ENCODE measurements at regions of chr13 and their contacts with region 1.

Region 1: DNA sequence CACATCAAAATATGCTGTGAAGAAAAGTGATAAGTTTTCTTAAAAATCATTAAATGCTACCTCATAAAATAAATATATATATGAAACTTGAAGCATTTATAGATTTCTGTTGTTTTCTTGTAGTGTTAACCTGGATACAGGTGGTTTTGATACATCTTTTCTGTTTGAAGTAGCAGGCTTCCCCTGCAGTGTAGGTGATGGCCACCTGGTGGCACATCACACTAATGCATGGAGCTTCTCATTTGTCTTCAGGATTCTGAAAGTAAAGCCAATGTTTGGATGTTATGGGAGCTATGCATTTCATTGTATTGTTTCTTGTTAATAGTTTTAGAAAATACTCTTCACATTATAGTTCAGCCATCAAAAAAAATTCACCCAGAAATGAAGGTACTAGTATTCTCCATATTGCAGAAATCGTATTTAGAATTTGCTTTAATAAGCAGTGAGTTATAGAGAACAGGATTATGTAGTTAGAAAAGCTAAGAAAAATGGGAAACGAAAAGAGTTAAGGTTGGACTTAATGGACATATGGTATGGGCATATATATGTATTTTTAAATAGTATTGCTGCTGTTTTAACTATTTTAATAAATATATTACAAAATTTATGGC is 18.7 kb downstream of the GPR180 start:
- DNase-seq: peak in 4 of 9 experiments; percentile 14 to 50 (median 25)
- ATAC-seq: peak; percentile 73
- H3K4me3 ChIP-seq: no peak overlapping the region
- H3K4me3 Mint-ChIP-seq: no peak overlapping the region
- H3K27ac ChIP-seq: no peak overlapping the region
- H3K27ac Mint-ChIP-seq: no peak overlapping the region
- H3K4me1 ChIP-seq: no peaks in the 10 kb centered on the region
- H3K4me1 Mint-ChIP-seq: peaks cover 17% of the 10 kb centered on the region
- H3K27me3 ChIP-seq: no peaks in the 10 kb centered on the region
- H3K27me3 Mint-ChIP-seq: no peaks in the 10 kb centered on the region
- CTCF ChIP-seq: peak; percentile 65

Region 2: GRCh38 chr13:94435604-94436226 is 184.7 kb before region 1 on chr13:
- CTCF ChIA-PET with region 1: interaction called, 311 read pairs
- POLR2A ChIA-PET with region 1: interaction called, 6 read pairs
- intact Hi-C with region 1: loop called (anchors 1 kb)
- DNase-seq: peak in 2 of 9 experiments; percentile 54 to 64
- ATAC-seq: peak; percentile 81
- H3K4me3 ChIP-seq: no peak overlapping the region
- H3K4me3 Mint-ChIP-seq: no peak overlapping the region
- H3K27ac ChIP-seq: no peak overlapping the region
- H3K27ac Mint-ChIP-seq: no peak overlapping the region
- H3K4me1 ChIP-seq: no peaks in the 10 kb centered on the region
- H3K4me1 Mint-ChIP-seq: peaks cover 4% of the 10 kb centered on the region
- H3K27me3 ChIP-seq: no peaks in the 10 kb centered on the region
- H3K27me3 Mint-ChIP-seq: no peaks in the 10 kb centered on the region
- CTCF ChIP-seq: peak; percentile 82

Region 3: DNA sequence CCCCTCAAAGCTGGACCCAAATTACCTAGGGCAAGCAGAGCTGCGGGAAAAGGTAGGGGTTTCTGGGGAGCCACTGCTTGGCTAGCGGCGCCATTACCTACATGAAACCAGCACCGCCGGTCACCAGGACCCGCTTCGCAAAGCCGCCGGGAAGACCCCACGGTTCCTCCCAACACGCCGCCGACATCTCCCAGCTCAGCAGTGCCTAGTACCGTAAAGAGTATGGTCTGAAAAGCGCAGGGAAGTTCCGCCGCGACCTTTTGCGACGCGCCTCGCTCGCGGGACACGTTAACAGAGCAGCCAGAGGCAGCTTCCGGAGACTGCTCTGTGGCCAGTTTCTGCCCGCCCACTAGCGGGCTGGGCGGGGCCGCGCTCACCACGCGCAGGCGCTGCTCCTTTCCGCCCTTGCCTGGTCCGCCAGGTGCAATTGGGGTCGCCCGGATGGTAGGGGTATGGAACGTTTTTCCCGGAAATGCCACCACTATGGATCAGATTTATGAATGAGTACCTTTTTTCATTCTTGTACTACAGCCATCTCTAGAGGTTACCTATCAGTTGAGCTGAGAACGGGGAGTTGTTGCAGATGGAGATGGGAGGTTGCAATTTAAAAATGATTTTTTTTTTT is 24.3 kb before region 1 on chr13 and contains the start of gene TGDS:
- CTCF ChIA-PET with region 1: interaction called, 12 read pairs
- POLR2A ChIA-PET with region 1: interaction called, 6 read pairs
- intact Hi-C with region 1: loop called in 1 of 2 experiments (anchors 2 kb)
- DNase-seq: peak; percentile 74 to 96 (median 87)
- ATAC-seq: peak; percentile 97
- H3K4me3 ChIP-seq: peak within 1 kb of the TSS; percentile 94 to 97
- H3K4me3 Mint-ChIP-seq: peak within 1 kb of the TSS; percentile 88
- H3K27ac ChIP-seq: peak within 1 kb of the TSS; percentile 77 to 83
- H3K27ac Mint-ChIP-seq: peak within 1 kb of the TSS; percentile 94
- H3K4me1 ChIP-seq: peaks cover 24% of the 10 kb centered on the region
- H3K4me1 Mint-ChIP-seq: peaks cover 42% of the 10 kb centered on the region
- H3K27me3 ChIP-seq: no peaks in the 10 kb centered on the region
- H3K27me3 Mint-ChIP-seq: no peaks in the 10 kb centered on the region
- CTCF ChIP-seq: no peak
- total RNA-seq, gene TGDS: 4.5 to 4.6 TPM

Region 4: GRCh38 chr13:94601446-94602431 is 18.7 kb before region 1 on chr13 and contains the start of gene GPR180:
- CTCF ChIA-PET with region 1: interaction called, 19 read pairs
- POLR2A ChIA-PET with region 1: no interaction called
- intact Hi-C with region 1: loop called in 1 of 2 experiments (anchors 2 kb)
- DNase-seq: peak; percentile 66 to 97 (median 87)
- ATAC-seq: peak; percentile 98
- H3K4me3 ChIP-seq: peak within 1 kb of the TSS; percentile 62 to 76
- H3K4me3 Mint-ChIP-seq: peak within 1 kb of the TSS; percentile 84
- H3K27ac ChIP-seq: peak within 1 kb of the TSS; percentile 43 to 51
- H3K27ac Mint-ChIP-seq: peak within 1 kb of the TSS; percentile 86
- H3K4me1 ChIP-seq: peaks cover 3% of the 10 kb centered on the region
- H3K4me1 Mint-ChIP-seq: peaks cover 42% of the 10 kb centered on the region
- H3K27me3 ChIP-seq: no peaks in the 10 kb centered on the region
- H3K27me3 Mint-ChIP-seq: no peaks in the 10 kb centered on the region
- CTCF ChIP-seq: no peak
- total RNA-seq, gene GPR180: 0.64 to 0.71 TPM

Region 5: DNA sequence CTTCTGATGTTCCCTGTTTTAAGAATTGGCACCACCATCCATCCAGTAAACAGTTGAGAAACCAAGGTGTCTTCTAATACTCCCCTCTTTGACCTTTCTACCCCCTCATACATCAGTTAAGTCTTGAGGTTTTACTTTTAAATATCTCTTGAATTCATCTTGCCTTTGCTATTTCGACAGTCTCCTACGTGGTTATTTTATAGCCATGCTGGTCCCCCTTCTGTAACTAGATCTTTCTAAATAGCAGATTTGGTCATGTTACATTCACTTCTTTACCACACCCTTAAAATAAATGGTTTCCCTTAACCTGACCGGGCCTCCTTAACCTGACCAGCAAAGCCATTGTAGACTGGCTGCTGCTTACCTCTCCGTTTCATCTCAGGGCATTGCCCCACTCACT is 13.3 kb before region 1 on chr13:
- CTCF ChIA-PET with region 1: interaction called, 19 read pairs
- POLR2A ChIA-PET with region 1: no interaction called
- intact Hi-C with region 1: no loop called
- DNase-seq: no peak
- ATAC-seq: no peak
- H3K4me3 ChIP-seq: no peak overlapping the region
- H3K4me3 Mint-ChIP-seq: no peak overlapping the region
- H3K27ac ChIP-seq: no peak overlapping the region
- H3K27ac Mint-ChIP-seq: peak overlapping the region; percentile 49
- H3K4me1 ChIP-seq: peaks cover 3% of the 10 kb centered on the region
- H3K4me1 Mint-ChIP-seq: peaks cover 37% of the 10 kb centered on the region
- H3K27me3 ChIP-seq: no peaks in the 10 kb centered on the region
- H3K27me3 Mint-ChIP-seq: no peaks in the 10 kb centered on the region
- CTCF ChIP-seq: no peak

Region 6: DNA sequence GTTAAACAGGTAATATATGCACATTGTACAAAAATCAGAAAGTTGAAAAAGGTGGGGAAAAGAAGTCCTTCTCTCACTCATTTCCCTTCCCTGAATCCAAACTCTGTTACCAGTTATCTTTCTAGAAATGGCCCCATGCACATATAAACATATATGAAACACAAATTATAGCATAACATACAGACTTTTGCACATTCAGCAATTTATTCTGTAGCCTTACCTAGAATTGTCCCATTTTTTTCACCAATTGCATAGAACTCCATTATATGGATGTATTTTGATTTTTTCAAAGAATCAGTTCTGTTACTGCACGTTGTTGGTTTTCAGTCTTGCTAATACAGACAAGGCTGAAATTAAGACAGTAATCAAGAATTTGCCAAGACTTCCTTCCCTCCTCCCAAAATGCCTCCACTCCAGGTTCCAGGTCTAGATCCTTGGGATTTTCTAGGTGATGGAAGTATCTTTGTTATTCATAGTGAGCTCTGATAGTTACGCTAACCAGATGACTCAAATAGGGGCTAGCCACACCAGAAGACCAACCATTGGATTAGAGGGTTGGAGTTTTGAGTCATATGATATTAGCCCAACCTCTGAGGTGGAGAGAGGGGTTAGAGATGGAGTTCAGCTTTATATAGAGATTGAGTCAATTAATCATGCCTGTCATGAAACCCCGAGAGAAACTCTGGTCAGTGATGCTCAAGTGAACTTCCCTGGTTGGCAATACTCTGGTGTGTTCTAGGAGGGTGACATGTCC is 12.0 kb after region 1 on chr13:
- CTCF ChIA-PET with region 1: interaction called, 14 read pairs
- POLR2A ChIA-PET with region 1: no interaction called
- intact Hi-C with region 1: no loop called
- DNase-seq: no peak
- ATAC-seq: no peak
- H3K4me3 ChIP-seq: no peak overlapping the region
- H3K4me3 Mint-ChIP-seq: no peak overlapping the region
- H3K27ac ChIP-seq: no peak overlapping the region
- H3K27ac Mint-ChIP-seq: no peak overlapping the region
- H3K4me1 ChIP-seq: no peaks in the 10 kb centered on the region
- H3K4me1 Mint-ChIP-seq: no peaks in the 10 kb centered on the region
- H3K27me3 ChIP-seq: no peaks in the 10 kb centered on the region
- H3K27me3 Mint-ChIP-seq: no peaks in the 10 kb centered on the region
- CTCF ChIP-seq: no peak

Region 7: DNA sequence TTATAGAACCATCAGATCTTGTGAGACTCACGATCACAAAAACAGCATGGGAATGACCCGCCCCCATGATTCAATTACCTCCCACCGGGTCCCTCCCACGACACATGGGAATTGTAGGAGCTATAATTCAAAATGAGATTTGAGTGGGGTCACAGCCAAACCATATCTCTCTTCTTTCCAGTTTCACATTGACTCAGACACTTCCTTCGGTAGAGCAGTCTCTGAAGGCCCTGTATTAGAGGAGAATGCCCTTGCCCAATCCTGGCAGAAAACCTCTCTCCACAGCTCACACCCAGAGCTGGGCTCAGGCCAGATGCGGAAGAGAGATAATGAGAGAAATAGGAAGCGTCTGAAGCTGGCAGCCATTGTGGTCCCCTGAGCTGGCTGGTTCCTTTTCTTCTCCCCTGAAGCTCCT is 859.7 kb after region 1 on chr13:
- CTCF ChIA-PET with region 1: no interaction called
- POLR2A ChIA-PET with region 1: no interaction called
- intact Hi-C with region 1: loop called in 1 of 2 experiments (anchors 5 kb)
- DNase-seq: peak in 1 of 9 experiments; percentile 23
- ATAC-seq: no peak
- H3K4me3 ChIP-seq: no peak overlapping the region
- H3K4me3 Mint-ChIP-seq: no peak overlapping the region
- H3K27ac ChIP-seq: no peak overlapping the region
- H3K27ac Mint-ChIP-seq: no peak overlapping the region
- H3K4me1 ChIP-seq: no peaks in the 10 kb centered on the region
- H3K4me1 Mint-ChIP-seq: peaks cover 4% of the 10 kb centered on the region
- H3K27me3 ChIP-seq: no peaks in the 10 kb centered on the region
- H3K27me3 Mint-ChIP-seq: peaks cover 5% of the 10 kb centered on the region
- CTCF ChIP-seq: no peak

Measured in CD8-positive, alpha-beta T cell (primary cell).